Calu3 (cell line): ENCODE measurements at regions of chr6 and their contacts with region 1.

Region 1: GRCh38 chr6:127737009-127737486 is 160.1 kb downstream of the C6orf58 start:
- DNase-seq: peak; percentile 50
- H3K4me3 Mint-ChIP-seq: no peak overlapping the region
- H3K27ac Mint-ChIP-seq: no peak overlapping the region
- H3K4me1 Mint-ChIP-seq: no peaks in the 10 kb centered on the region
- H3K27me3 Mint-ChIP-seq: no peaks in the 10 kb centered on the region
- CTCF ChIP-seq: peak; percentile 63

Region 2: GRCh38 chr6:127971945-127972391 is 234.9 kb after region 1 on chr6:
- CTCF ChIA-PET with region 1: no interaction called
- intact Hi-C with region 1: loop called (anchors 5 kb)
- DNase-seq: peak; percentile 47
- H3K4me3 Mint-ChIP-seq: peak overlapping the region; percentile 65
- H3K27ac Mint-ChIP-seq: peak overlapping the region; percentile 94
- H3K4me1 Mint-ChIP-seq: peaks cover 33% of the 10 kb centered on the region
- H3K27me3 Mint-ChIP-seq: no peaks in the 10 kb centered on the region
- CTCF ChIP-seq: no peak

Region 3: GRCh38 chr6:128731249-128732165 is 994.5 kb after region 1 on chr6:
- CTCF ChIA-PET with region 1: no interaction called
- intact Hi-C with region 1: loop called (anchors 2 kb)
- DNase-seq: peak; percentile 36
- H3K4me3 Mint-ChIP-seq: no peak overlapping the region
- H3K27ac Mint-ChIP-seq: no peak overlapping the region
- H3K4me1 Mint-ChIP-seq: no peaks in the 10 kb centered on the region
- H3K27me3 Mint-ChIP-seq: no peaks in the 10 kb centered on the region
- CTCF ChIP-seq: peak; percentile 46

Region 4: GRCh38 chr6:129251669-129252376 is 1514.8 kb after region 1 on chr6:
- CTCF ChIA-PET with region 1: interaction called, 3 read pairs
- intact Hi-C with region 1: loop called (anchors 10 kb)
- DNase-seq: peak; percentile 60
- H3K4me3 Mint-ChIP-seq: no peak overlapping the region
- H3K27ac Mint-ChIP-seq: no peak overlapping the region
- H3K4me1 Mint-ChIP-seq: peaks cover 21% of the 10 kb centered on the region
- H3K27me3 Mint-ChIP-seq: peaks cover 17% of the 10 kb centered on the region
- CTCF ChIP-seq: peak; percentile 77